ENCODE measurements at regions of chr15 and their contacts with region 1.

Region 1: DNA sequence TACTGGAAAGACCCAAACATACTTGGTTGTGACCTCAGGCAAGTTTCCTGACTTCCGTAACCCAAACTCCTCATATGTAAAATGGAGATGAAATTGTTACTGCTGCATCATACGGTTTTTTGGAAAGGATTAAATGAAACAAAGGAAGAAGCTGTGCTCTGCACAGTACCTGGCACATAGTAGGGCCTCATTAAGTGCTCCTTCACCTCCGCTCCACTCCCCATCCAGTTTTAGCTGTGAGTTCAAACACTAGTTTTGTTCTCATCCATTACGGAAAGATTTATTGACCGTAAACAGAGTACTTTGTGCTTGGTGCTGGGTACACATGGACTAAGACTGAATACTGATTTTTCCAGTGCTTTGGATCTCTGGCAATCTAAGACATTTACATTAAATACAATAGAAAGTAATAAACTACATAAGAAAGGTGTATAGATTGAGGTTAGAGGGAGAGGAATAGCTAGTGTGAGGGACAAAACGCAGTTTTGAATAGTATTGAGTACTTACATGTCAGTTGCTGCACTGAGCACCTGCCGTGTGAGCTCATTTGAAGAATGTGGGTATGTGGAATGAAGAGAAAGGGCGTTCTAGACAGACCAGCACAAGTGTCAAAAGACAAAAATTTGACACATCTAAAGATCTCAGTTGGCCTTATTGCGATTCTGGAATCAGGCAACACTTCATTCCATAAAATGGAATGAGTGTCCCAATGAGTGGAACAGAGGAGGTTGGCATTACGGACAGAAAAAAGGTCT is 596 bp upstream of the ICE2 start:
- DNase-seq: no peak
- H3K4me3 ChIP-seq: peak overlapping the region; percentile 66 to 90 (median 90)
- H3K27ac ChIP-seq: peak overlapping the region; percentile 96 to 97
- H3K4me1 ChIP-seq: peaks cover 0 to 16% of the 10 kb centered on the region in 2 donors
- H3K27me3 ChIP-seq: no peaks in the 10 kb centered on the region
- CTCF ChIP-seq: no peak
- POLR2A ChIP-seq: no peak

Region 2: DNA sequence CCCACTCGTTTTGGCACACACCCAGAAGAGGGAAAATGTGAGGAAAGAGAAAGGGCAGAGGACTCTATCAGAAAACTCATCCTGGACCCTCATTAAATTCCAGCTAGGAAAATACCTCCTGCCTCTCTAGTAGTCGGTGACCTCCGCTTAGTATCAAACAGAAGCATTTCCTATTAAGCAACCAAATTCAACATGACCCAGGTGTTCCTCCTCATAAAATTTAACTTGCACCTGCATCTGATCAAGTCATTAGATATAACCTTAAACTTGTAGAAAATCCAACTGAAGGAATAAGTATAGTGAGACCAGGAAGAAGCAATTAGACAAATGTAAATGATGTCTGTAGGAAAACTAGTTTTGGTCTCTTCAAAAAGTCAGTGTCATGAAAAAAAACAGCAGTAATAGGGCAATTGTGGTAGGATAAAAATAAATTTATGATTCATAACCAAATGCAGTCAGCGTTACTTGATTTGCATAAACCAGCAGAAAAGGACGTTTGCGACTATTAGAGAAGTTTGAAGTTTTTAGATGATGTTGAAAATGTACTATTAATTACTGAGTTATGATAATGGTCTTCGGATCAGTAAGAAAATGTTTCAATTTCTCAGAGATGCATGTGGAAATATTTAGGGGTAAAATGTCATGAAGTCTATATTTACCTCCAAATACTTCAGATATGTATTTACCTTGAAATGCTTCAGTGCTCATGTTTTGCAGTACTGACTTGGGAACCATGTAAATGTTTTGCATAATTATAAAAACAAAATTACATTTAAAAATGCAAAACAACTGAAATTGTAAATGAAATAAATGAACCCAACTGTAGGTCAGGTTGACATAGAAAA is 1228.3 kb before region 1 on chr15:
- intact Hi-C with region 1: loop called (anchors 10 kb)
- DNase-seq: no peak
- H3K4me3 ChIP-seq: no peak overlapping the region
- H3K27ac ChIP-seq: no peak overlapping the region
- H3K4me1 ChIP-seq: no peaks in the 10 kb centered on the region
- H3K27me3 ChIP-seq: no peaks in the 10 kb centered on the region
- CTCF ChIP-seq: no peak
- POLR2A ChIP-seq: no peak

Measured in breast epithelium (tissue), 4 donors.